CD8-positive, alpha-beta T cell (primary cell): ENCODE measurements at regions of chr4 and their contacts with region 1.

Region 1: DNA sequence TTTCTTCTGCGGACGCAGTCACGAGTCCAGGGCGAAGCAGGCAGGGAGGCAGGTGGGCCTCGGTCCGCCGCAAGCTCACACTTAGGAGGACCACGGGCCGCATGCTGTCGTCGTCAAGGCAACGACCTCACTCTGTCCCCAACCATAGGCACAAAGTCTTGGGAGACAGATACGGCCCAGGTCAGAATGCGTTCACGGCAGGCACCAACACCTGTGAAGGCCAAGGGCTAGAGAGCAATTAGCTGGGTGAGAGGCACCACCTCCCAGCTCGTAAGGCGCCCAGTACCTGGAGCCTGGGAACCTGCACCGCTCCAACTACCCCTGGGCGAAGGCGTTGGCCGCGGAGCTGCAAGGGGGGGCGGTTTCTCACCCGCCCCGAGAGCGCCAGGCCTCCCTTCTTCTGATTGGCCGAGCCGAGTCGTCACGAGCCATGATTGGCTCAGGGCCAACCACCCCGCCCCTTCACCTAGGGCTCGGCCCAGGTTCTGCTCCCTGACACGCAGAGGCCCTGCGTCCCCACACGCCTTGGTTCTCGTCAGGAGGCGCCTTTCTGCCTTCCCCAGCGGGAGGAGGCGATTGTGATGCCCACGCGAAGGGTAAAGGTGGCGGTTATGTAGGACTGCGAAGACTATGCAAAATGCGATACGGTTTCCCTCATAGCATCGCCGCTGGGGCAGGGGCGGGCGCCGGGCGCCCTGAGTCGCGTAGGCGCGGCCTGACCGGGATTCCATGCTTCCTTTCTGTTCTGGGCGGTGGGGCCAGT is at the start of gene CDKL2:
- DNase-seq: peak; percentile 85 to 96 (median 95)
- ATAC-seq: peak; percentile 99
- H3K4me3 ChIP-seq: peak within 1 kb of the TSS; percentile 74 to 82
- H3K4me3 Mint-ChIP-seq: peak within 1 kb of the TSS; percentile 91
- H3K27ac ChIP-seq: peak within 1 kb of the TSS; percentile 51 to 56
- H3K27ac Mint-ChIP-seq: peak within 1 kb of the TSS; percentile 84
- H3K4me1 ChIP-seq: peaks cover 6% of the 10 kb centered on the region
- H3K4me1 Mint-ChIP-seq: peaks cover 15% of the 10 kb centered on the region
- H3K27me3 ChIP-seq: no peaks in the 10 kb centered on the region
- H3K27me3 Mint-ChIP-seq: no peaks in the 10 kb centered on the region
- CTCF ChIP-seq: no peak
- total RNA-seq, gene CDKL2: 0.89 to 1.4 TPM

Region 2: GRCh38 chr4:75432683-75433082 is 197.7 kb before region 1 on chr4:
- CTCF ChIA-PET with region 1: no interaction called
- POLR2A ChIA-PET with region 1: no interaction called
- intact Hi-C with region 1: no loop called
- DNase-seq: peak in 2 of 9 experiments; percentile 2 to 7
- ATAC-seq: no peak
- H3K4me3 ChIP-seq: no peak overlapping the region
- H3K4me3 Mint-ChIP-seq: no peak overlapping the region
- H3K27ac ChIP-seq: no peak overlapping the region
- H3K27ac Mint-ChIP-seq: no peak overlapping the region
- H3K4me1 ChIP-seq: no peaks in the 10 kb centered on the region
- H3K4me1 Mint-ChIP-seq: no peaks in the 10 kb centered on the region
- H3K27me3 ChIP-seq: no peaks in the 10 kb centered on the region
- H3K27me3 Mint-ChIP-seq: peaks cover 23% of the 10 kb centered on the region
- CTCF ChIP-seq: no peak

Region 3: GRCh38 chr4:75514131-75514948 is 116.0 kb before region 1 on chr4 and contains the starts of genes RCHY1 and THAP6:
- CTCF ChIA-PET with region 1: no interaction called
- POLR2A ChIA-PET with region 1: no interaction called
- intact Hi-C with region 1: loop called (anchors 1 kb)
- DNase-seq: peak; percentile 84 to 97 (median 92)
- ATAC-seq: peak; percentile 87
- H3K4me3 ChIP-seq: peak within 1 kb of the TSS; percentile 92 to 94
- H3K4me3 Mint-ChIP-seq: no peak within 1 kb of the TSS
- H3K27ac ChIP-seq: peak within 1 kb of the TSS; percentile 96 to 98
- H3K27ac Mint-ChIP-seq: peak within 1 kb of the TSS; percentile 99
- H3K4me1 ChIP-seq: peaks cover 55% of the 10 kb centered on the region
- H3K4me1 Mint-ChIP-seq: peaks cover 63% of the 10 kb centered on the region
- H3K27me3 ChIP-seq: no peaks in the 10 kb centered on the region
- H3K27me3 Mint-ChIP-seq: no peaks in the 10 kb centered on the region
- CTCF ChIP-seq: no peak
- total RNA-seq, gene RCHY1: 45.4 to 52.8 TPM
- total RNA-seq, gene THAP6: 15.3 to 16.3 TPM

Region 4: DNA sequence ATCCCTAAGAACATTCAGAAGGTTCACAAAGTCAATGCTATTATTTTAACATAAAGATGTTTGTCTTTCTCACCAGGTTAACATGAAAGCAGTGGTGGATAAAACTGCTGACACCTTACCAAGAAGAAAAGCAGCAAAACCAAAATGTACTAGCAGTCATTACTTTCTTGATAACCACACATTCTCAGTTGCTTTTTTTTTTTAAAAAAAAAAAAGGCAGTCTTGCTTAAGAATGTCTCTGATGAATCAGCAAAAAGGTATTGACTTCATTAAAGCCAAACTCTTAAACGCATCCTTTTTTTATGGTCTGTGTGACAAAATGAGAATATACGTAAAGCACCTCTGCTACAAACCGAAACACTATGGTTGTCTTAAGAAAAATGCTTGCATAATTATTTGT is 32.0 kb before region 1 on chr4:
- CTCF ChIA-PET with region 1: no interaction called
- POLR2A ChIA-PET with region 1: no interaction called
- intact Hi-C with region 1: no loop called
- DNase-seq: peak in 2 of 9 experiments; percentile 9 to 13
- ATAC-seq: no peak
- H3K4me3 ChIP-seq: no peak overlapping the region
- H3K4me3 Mint-ChIP-seq: no peak overlapping the region
- H3K27ac ChIP-seq: no peak overlapping the region
- H3K27ac Mint-ChIP-seq: no peak overlapping the region
- H3K4me1 ChIP-seq: no peaks in the 10 kb centered on the region
- H3K4me1 Mint-ChIP-seq: no peaks in the 10 kb centered on the region
- H3K27me3 ChIP-seq: no peaks in the 10 kb centered on the region
- H3K27me3 Mint-ChIP-seq: no peaks in the 10 kb centered on the region
- CTCF ChIP-seq: no peak

Region 5: GRCh38 chr4:75612306-75612705 is 18.0 kb before region 1 on chr4:
- CTCF ChIA-PET with region 1: no interaction called
- POLR2A ChIA-PET with region 1: no interaction called
- intact Hi-C with region 1: no loop called
- DNase-seq: no peak
- ATAC-seq: no peak
- H3K4me3 ChIP-seq: no peak overlapping the region
- H3K4me3 Mint-ChIP-seq: no peak overlapping the region
- H3K27ac ChIP-seq: no peak overlapping the region
- H3K27ac Mint-ChIP-seq: no peak overlapping the region
- H3K4me1 ChIP-seq: no peaks in the 10 kb centered on the region
- H3K4me1 Mint-ChIP-seq: no peaks in the 10 kb centered on the region
- H3K27me3 ChIP-seq: no peaks in the 10 kb centered on the region
- H3K27me3 Mint-ChIP-seq: no peaks in the 10 kb centered on the region
- CTCF ChIP-seq: no peak

Region 6: GRCh38 chr4:75644095-75644494 is 13.7 kb after region 1 on chr4:
- CTCF ChIA-PET with region 1: no interaction called
- POLR2A ChIA-PET with region 1: interaction called, 13 read pairs
- intact Hi-C with region 1: loop called in 1 of 2 experiments (anchors 1 kb)
- DNase-seq: no peak
- ATAC-seq: no peak
- H3K4me3 ChIP-seq: no peak overlapping the region
- H3K4me3 Mint-ChIP-seq: no peak overlapping the region
- H3K27ac ChIP-seq: no peak overlapping the region
- H3K27ac Mint-ChIP-seq: peak overlapping the region; percentile 65
- H3K4me1 ChIP-seq: no peaks in the 10 kb centered on the region
- H3K4me1 Mint-ChIP-seq: peaks cover 21% of the 10 kb centered on the region
- H3K27me3 ChIP-seq: no peaks in the 10 kb centered on the region
- H3K27me3 Mint-ChIP-seq: no peaks in the 10 kb centered on the region
- CTCF ChIP-seq: no peak

Region 7: GRCh38 chr4:75653845-75654503 is 23.6 kb after region 1 on chr4:
- CTCF ChIA-PET with region 1: no interaction called
- POLR2A ChIA-PET with region 1: no interaction called
- intact Hi-C with region 1: loop called (anchors 2 kb)
- DNase-seq: peak in 2 of 9 experiments; percentile 26 to 45
- ATAC-seq: peak; percentile 15
- H3K4me3 ChIP-seq: no peak overlapping the region
- H3K4me3 Mint-ChIP-seq: peak overlapping the region; percentile 29
- H3K27ac ChIP-seq: peak overlapping the region in 1 of 2 experiments; percentile 10
- H3K27ac Mint-ChIP-seq: peak overlapping the region; percentile 95
- H3K4me1 ChIP-seq: peaks cover 57% of the 10 kb centered on the region
- H3K4me1 Mint-ChIP-seq: peaks cover 68% of the 10 kb centered on the region
- H3K27me3 ChIP-seq: no peaks in the 10 kb centered on the region
- H3K27me3 Mint-ChIP-seq: no peaks in the 10 kb centered on the region
- CTCF ChIP-seq: no peak

Region 8: GRCh38 chr4:76363556-76364290 is 733.4 kb after region 1 on chr4:
- CTCF ChIA-PET with region 1: no interaction called
- POLR2A ChIA-PET with region 1: no interaction called
- intact Hi-C with region 1: no loop called
- DNase-seq: no peak
- ATAC-seq: no peak
- H3K4me3 ChIP-seq: no peak overlapping the region
- H3K4me3 Mint-ChIP-seq: no peak overlapping the region
- H3K27ac ChIP-seq: no peak overlapping the region
- H3K27ac Mint-ChIP-seq: no peak overlapping the region
- H3K4me1 ChIP-seq: no peaks in the 10 kb centered on the region
- H3K4me1 Mint-ChIP-seq: no peaks in the 10 kb centered on the region
- H3K27me3 ChIP-seq: no peaks in the 10 kb centered on the region
- H3K27me3 Mint-ChIP-seq: peaks cover 15% of the 10 kb centered on the region
- CTCF ChIP-seq: no peak